Cardiac septum (tissue), 1 donor: ENCODE measurements at regions of chr1 and their contacts with region 1.

Region 1: DNA sequence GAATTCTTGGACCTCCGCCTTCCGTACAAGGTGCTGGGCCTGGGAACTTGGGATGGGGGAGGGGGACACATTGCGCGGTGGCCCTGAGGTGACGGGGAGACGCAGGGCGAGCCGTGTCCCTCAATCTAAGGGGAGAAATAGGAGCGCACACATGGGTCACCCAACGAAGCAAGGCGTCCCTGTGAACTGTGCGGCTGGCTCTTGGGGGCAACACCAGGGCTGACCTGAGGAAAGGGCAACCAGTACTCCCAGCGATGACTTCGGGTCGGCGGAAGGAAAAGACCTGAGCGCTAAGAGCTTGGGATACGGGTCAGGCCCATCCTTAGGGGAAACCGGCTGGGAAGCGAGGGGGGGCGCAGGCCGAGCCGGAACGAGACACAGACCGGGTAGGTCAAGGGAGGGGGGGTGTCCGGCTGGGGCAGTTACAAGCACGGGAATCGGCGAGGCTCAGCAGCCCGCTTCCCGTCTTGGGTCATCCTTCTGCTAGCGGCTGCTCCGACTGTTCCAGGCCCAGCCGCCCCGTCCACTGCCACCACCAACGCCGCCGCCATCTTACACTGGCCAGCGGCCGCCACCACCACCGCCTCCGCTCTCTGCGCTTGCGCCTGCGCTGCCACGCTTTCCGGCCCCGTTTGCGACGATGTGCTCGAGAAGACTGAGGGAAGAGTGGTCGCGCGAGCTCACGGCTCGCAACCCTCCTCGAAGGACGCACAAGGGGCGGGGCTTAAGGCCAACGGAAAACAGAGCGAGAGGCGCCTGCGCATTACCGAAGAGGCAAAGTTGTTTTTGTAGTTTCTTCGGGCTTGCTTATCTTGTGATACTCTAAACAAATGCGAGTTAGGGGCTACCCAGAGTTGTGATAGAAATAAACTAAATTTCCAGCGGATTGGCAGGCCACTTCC is at the start of gene DCAF8:
- DNase-seq: peak; percentile 99
- total RNA-seq, gene DCAF8: 123 TPM

Region 2: DNA sequence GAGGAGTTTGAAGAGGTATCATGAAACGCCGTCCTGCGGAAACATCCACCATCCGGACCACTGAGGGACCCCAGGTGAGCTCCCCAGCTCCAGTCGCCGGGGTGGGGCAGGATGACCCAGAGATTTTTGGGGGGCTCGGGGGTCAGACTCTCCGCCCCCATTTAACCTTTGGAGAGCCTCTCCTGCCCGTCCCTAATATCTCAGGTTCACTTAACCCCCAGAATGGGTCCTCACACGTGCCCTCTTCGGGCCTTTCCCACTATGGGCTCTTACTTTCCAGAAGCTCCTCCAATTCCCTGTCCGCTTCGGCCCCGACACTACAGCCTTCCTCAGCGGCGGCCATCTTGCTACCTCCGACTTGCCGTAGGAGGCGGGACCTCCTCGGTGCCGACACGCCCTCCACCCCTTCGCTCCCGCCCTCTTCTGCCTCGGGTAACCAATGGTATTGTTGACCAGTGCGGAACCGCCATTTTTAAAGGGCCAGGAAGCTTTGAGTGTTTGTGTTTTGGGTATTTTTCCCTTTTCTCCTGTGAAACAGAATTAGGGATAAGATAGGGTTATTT is 22.7 kb after region 1 on chr1 and contains the start of gene PEX19:
- intact Hi-C with region 1: loop called (anchors 2 kb)
- DNase-seq: peak; percentile 97
- total RNA-seq, gene PEX19: 68.9 TPM

Region 3: DNA sequence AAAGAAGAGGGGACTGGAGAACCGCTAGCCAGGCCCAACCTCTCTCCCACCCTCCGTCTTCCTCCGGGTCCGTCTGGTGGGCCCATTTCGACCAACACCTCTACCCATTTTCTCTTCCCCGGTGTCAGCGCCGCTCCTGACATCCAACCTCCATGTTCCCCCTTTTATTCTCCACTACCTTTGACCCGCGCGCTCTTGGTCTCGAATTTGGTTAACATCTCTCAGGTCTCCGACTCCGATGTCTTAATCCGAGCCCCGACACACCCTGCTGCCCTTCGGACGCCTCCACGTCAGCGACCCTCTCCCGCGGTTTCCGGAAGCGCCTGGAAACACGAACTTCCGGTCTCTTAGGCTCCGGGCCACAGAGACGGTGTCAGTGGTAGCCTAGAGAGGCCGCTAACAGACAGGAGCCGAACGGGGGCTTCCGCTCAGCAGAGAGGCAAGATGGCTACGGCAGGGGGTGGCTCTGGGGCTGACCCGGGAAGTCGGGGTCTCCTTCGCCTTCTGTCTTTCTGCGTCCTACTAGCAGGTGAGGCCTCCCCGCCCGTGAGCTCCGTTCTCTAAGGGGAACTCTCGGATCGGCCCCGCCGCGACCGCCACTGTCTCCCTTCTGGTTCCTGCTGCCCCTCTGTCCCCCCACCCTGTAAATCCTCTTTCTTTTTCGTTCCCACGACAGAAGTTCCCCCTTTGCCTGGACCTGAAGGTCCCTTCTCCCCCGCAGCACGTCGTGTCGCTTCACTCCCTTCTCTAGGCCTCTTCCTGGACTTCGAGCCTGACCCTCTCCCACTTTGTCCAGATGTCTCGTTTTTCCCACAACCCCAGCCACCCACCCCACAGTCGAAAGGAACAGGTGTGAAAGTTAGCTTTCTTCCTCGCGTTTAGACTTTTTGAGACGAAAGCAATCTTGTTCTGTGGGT is 81.1 kb after region 1 on chr1 and contains the starts of genes COPA and NCSTN:
- intact Hi-C with region 1: loop called (anchors 2 kb)
- DNase-seq: peak; percentile 95
- total RNA-seq, gene COPA: 118 TPM
- total RNA-seq, gene NCSTN: 53.7 TPM